Activated T-helper 2 cell treated with anti-CD3 and anti-CD28 coated beads, Interferon-gamma antibody, Interleukin-2, Interleukin-4, amounts not matched to agents 10 μg/mL and 5 μg/mL and 100 μg/mL, durations not matched to agents 14 hours and 24 hours and 36 hours (primary cell): ENCODE measurements at regions of chr19 and their contacts with region 1.

Region 1: GRCh38 chr19:40777937-40778705 is at the start of gene RAB4B:
- DNase-seq: peak; percentile 100
- H3K4me3 Mint-ChIP-seq: peak within 1 kb of the TSS; percentile 96
- H3K27ac Mint-ChIP-seq: peak within 1 kb of the TSS; percentile 96
- H3K4me1 Mint-ChIP-seq: peaks cover 35% of the 10 kb centered on the region
- H3K27me3 Mint-ChIP-seq: no peaks in the 10 kb centered on the region
- total RNA-seq, gene RAB4B: 50.1 and 50.4 TPM in 2 replicates

Region 2: DNA sequence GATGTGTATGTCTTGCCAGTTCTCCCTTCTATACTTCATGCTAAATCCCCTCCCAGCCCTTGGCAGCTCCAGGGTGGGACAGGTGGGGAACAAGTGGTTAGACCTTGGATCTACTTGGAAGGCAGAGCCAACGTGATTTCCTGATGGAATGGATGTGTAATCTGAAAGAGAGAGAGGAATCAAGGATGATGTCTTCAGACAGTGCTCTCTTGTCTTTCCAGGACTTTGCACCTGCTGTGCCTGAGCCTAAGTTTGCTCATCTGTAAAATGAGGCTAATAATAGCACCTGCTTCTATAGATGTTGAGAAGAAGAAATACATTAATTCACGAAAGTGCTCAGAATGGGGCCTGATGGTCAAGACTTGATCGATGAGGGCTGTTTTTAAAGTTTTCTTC is 13.9 kb after region 1 on chr19:
- intact Hi-C with region 1: loop called (anchors 1 kb)
- DNase-seq: no peak
- H3K4me3 Mint-ChIP-seq: no peak overlapping the region
- H3K27ac Mint-ChIP-seq: peak overlapping the region; percentile 78
- H3K4me1 Mint-ChIP-seq: peaks cover 11% of the 10 kb centered on the region
- H3K27me3 Mint-ChIP-seq: no peaks in the 10 kb centered on the region

Region 3: GRCh38 chr19:40822161-40822560 is 44.0 kb after region 1 on chr19:
- intact Hi-C with region 1: no loop called
- DNase-seq: no peak
- H3K4me3 Mint-ChIP-seq: no peak overlapping the region
- H3K27ac Mint-ChIP-seq: no peak overlapping the region
- H3K4me1 Mint-ChIP-seq: peaks cover 23% of the 10 kb centered on the region
- H3K27me3 Mint-ChIP-seq: no peaks in the 10 kb centered on the region